AG04449 (cell line): ENCODE measurements at regions of chr5 and their contacts with region 1.

Region 1: GRCh38 chr5:7261049-7261448 is 134.9 kb upstream of the ADCY2 start:
- DNase-seq: peak; percentile 17
- H3K4me3 ChIP-seq: no peak overlapping the region
- CTCF ChIP-seq: peak; percentile 43

Region 2: GRCh38 chr5:7391814-7392692 is 131.0 kb after region 1 on chr5:
- CTCF ChIA-PET with region 1: interaction called, 52 read pairs
- POLR2A ChIA-PET with region 1: no interaction called
- DNase-seq: no peak
- H3K4me3 ChIP-seq: no peak overlapping the region
- CTCF ChIP-seq: peak; percentile 64

Region 3: DNA sequence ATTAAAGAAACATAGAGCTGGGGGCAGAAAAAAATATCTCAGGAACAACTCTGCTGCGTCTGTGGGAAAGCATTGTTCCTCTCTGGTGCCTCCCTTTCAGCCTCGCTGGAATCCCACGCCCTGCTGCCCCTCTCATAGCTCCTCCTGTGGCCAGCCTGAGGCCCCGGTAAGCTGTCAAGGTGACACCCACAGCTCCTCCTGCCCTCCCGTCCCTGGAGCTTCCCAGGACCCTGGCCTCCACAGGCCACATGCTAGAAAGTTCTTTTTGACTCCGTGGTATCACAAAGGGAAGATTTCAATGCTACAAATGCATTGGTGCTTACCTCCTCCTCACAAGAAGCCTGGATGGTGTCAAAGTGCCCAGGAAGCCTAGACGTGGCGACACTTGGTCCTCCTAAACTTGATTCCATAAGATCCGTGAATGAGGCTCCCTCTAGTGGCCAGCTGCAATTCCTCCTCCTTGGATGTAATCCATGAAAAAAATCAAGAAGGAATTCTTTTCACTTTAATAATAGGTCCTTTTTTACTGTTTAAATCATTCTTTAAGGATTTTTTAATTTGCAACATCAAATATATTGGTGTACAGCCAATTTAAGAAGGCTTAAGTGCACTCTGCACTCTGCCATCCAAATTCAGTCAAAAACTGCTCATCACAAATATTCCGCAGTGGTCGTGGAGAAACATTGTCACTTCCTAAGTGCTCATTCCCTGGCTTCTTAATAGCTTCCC is 485.0 kb after region 1 on chr5:
- CTCF ChIA-PET with region 1: interaction called, 56 read pairs
- POLR2A ChIA-PET with region 1: no interaction called
- DNase-seq: peak; percentile 17
- H3K4me3 ChIP-seq: no peak overlapping the region
- CTCF ChIP-seq: peak; percentile 83

Region 4: GRCh38 chr5:7856855-7857254 is 595.8 kb after region 1 on chr5:
- CTCF ChIA-PET with region 1: interaction called, 11 read pairs
- POLR2A ChIA-PET with region 1: no interaction called
- DNase-seq: no peak
- H3K4me3 ChIP-seq: no peak overlapping the region
- CTCF ChIP-seq: peak; percentile 48